ENCODE measurements at regions of chr12 and their contacts with region 1.

Region 1: DNA sequence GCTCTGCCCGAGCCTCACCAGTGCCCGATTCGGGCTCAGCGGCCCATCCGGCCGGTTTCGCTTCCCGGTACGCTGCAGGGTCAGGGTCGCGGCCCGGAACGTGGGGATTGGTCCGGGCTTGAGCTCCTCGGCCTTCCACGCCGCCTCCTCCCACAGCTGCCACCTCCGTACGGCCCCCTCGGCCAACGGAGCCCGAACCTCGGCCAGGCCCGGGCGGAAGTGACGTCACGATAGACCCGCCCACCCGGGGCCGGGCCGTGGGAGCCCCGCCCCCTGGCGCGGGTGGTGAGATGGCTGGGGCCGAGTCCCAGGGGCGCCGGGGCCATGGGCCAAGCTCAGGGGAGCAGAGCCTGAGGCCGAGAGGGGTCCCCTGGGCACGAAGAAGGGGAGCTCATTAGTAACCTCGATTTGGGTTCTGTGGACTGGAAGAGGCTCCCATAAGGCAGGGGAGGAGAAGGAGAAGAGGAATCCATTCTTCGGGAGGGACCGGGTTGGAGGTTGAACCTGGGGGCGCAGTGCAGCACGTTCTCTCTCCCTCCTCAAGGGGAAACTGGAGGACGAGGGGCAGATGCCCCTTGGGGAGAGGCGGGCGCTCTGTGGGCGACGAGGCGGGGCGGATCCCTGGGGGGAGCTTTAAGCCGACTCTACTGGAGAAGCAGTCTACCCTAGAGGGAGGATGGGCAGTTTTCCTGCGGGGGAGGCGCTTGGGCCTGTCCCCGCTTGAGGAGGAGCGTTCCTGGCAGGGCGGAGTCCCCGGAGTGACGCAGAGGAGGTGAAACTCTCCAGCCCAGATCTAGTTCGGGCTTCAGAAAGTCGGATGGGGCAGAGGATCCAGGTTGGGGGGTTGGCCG is at the start of gene MLF2:
- DNase-seq: peak; percentile 98 to 99
- ATAC-seq: peak; percentile 95 to 97
- H3K4me3 ChIP-seq: peak within 1 kb of the TSS; percentile 67 to 95 (median 92)
- H3K27ac ChIP-seq: peak within 1 kb of the TSS; percentile 89 to 100 (median 98)
- H3K4me1 ChIP-seq: peaks cover 10 to 12% of the 10 kb centered on the region in 2 donors
- H3K27me3 ChIP-seq: no peaks in the 10 kb centered on the region
- CTCF ChIP-seq: peak in 1 of 5 experiments; percentile 98
- POLR2A ChIP-seq: peak; percentile 93 to 94
- total RNA-seq, gene MLF2: 105 to 181 (median 165) TPM

Region 2: DNA sequence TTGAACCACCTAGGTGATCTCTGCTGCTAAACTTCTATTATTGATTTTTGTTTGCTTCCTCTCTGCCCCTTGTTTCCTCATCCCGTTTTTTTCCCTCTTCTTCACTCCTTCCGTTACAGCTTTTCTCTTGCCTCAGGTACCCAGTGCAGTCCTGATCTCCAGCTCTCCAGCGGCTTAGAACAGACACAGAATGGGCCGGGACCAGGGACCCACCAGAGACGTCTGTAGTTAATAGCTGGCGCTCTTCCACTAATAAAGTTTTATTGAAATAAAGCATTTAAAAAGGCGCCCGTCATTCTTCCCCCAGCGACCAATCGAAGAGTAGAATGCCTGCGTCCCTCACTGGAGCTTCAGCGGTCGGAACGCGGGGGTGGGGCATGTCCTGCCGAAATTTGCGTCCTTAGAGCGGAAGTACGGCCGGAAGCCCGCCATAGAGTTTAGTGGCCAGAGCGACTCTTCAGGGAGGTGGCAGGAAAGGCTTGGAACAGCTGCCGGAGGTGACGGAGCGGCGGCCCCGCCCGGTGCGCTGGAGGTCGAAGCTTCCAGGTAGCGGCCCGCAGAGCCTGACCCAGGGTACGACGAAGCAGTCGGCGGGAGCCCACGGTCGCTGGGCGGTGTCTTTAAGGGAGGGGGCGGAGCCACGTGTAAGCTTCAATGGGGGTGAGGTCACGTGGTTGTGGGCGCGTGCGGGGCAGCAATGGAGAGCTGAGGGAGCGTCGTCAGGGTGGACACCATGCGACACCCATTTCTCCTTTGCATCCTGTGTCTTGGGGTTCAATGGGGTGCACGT is 29.3 kb before region 1 on chr12 and contains the start of gene COPS7A:
- in situ Hi-C with region 1: no loop called
- intact Hi-C with region 1: loop called (anchors 1 kb)
- DNase-seq: peak; percentile 96 to 98
- ATAC-seq: peak; percentile 99
- H3K4me3 ChIP-seq: peak within 1 kb of the TSS; percentile 55 to 80 (median 74)
- H3K27ac ChIP-seq: peak within 1 kb of the TSS; percentile 81 to 90 (median 86)
- H3K4me1 ChIP-seq: peaks cover 6 to 10% of the 10 kb centered on the region in 2 donors
- H3K27me3 ChIP-seq: no peaks in the 10 kb centered on the region
- CTCF ChIP-seq: no peak
- POLR2A ChIP-seq: peak; percentile 39 to 58
- total RNA-seq, gene COPS7A: 82.0 to 132 (median 99.0) TPM

Region 3: GRCh38 chr12:6766651-6767349 is 13.7 kb after region 1 on chr12:
- in situ Hi-C with region 1: no loop called
- intact Hi-C with region 1: loop called (anchors 1 kb)
- DNase-seq: peak; percentile 59 to 65
- ATAC-seq: peak; percentile 69 to 73
- H3K4me3 ChIP-seq: peak overlapping the region; percentile 76 to 100 (median 88)
- H3K27ac ChIP-seq: peak overlapping the region; percentile 78 to 89 (median 84)
- H3K4me1 ChIP-seq: peaks cover 20 to 26% of the 10 kb centered on the region in 2 donors
- H3K27me3 ChIP-seq: peaks cover 0 to 9% (median 0%) of the 10 kb centered on the region in 3 donors
- CTCF ChIP-seq: peak; percentile 49 to 97 (median 81)
- POLR2A ChIP-seq: peak in 1 of 2 donors; percentile 38

Region 4: DNA sequence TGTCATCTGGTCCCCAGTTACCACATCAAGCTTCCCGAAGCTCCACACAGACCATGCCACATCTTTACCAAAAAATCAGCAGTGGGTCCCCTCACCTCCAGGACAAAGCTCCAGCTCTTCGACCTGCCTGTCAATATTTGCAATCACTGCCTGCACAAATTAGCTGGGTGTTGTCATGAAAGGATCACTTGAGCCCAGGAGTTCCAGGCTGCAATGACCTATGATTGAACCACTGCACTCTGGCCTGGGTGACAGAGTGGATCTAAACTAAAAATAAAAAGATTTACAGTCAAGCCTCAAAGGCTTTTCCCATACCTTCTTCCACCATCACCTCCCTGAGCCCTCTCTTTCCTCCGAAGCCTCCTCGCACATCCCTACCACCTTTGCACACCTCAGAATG is 43.4 kb after region 1 on chr12:
- in situ Hi-C with region 1: no loop called
- intact Hi-C with region 1: no loop called
- DNase-seq: no peak
- ATAC-seq: no peak
- H3K4me3 ChIP-seq: no peak overlapping the region
- H3K27ac ChIP-seq: no peak overlapping the region
- H3K4me1 ChIP-seq: no peaks in the 10 kb centered on the region
- H3K27me3 ChIP-seq: peaks cover 0 to 3% (median 0%) of the 10 kb centered on the region in 3 donors
- CTCF ChIP-seq: no peak
- POLR2A ChIP-seq: no peak

Region 5: DNA sequence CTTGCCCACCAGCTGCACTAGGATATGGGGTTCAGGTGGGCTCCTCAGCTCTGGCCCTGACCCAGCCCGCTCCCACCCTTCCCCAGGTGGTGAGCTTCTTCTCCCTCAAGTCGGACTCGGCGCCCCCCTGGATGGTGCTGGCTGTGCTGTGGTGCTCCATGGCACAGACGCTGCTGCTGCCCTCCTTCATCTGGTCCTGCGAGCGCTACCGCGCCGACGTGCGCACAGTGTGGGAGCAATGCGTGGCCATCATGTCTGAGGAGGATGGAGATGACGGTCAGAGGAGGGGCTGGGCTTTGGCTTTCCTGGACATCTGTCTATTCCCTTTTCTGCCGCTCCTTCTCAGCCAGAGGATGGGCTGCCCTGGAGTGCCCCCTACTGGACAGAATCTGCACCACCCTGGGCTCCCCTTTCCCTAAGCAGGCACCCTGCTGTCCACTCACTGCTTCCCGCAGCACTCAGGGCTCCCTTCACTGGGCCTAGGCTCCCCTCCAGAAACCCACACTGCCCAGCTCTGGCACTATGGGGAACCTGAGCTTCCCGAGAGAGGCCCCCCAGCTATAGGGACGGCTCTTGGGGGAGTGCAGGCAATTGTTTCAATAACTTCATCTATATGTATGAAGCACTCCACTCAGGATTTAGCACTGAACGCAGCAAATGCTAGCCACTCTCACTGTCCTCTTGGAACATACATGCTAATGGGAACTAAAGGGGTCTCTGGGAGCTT is 72.4 kb after region 1 on chr12:
- in situ Hi-C with region 1: no loop called
- intact Hi-C with region 1: loop called (anchors 5 kb)
- DNase-seq: peak; percentile 48 to 69
- ATAC-seq: peak; percentile 63 to 75
- H3K4me3 ChIP-seq: no peak overlapping the region
- H3K27ac ChIP-seq: no peak overlapping the region
- H3K4me1 ChIP-seq: peaks cover 3 to 11% of the 10 kb centered on the region in 2 donors
- H3K27me3 ChIP-seq: peaks cover 31 to 78% (median 53%) of the 10 kb centered on the region in 3 donors
- CTCF ChIP-seq: peak; percentile 62 to 85 (median 80)
- POLR2A ChIP-seq: no peak

Region 6: GRCh38 chr12:7018350-7019042 is 265.4 kb after region 1 on chr12 and contains the start of gene LPCAT3:
- in situ Hi-C with region 1: no loop called
- intact Hi-C with region 1: loop called (anchors 5 kb)
- DNase-seq: peak; percentile 94 to 98
- ATAC-seq: peak; percentile 92 to 95
- H3K4me3 ChIP-seq: peak within 1 kb of the TSS; percentile 81 to 95 (median 84)
- H3K27ac ChIP-seq: peak within 1 kb of the TSS; percentile 91 to 98 (median 95)
- H3K4me1 ChIP-seq: peaks cover 35 to 36% of the 10 kb centered on the region in 2 donors
- H3K27me3 ChIP-seq: no peaks in the 10 kb centered on the region
- CTCF ChIP-seq: peak; percentile 79 to 93 (median 89)
- POLR2A ChIP-seq: peak; percentile 81 to 88
- total RNA-seq, gene LPCAT3: 19.4 to 42.8 (median 36.7) TPM

Measured in gastrocnemius medialis (tissue), 4 donors.